ENCODE measurements at regions of chr14 and their contacts with region 1.

Region 1: DNA sequence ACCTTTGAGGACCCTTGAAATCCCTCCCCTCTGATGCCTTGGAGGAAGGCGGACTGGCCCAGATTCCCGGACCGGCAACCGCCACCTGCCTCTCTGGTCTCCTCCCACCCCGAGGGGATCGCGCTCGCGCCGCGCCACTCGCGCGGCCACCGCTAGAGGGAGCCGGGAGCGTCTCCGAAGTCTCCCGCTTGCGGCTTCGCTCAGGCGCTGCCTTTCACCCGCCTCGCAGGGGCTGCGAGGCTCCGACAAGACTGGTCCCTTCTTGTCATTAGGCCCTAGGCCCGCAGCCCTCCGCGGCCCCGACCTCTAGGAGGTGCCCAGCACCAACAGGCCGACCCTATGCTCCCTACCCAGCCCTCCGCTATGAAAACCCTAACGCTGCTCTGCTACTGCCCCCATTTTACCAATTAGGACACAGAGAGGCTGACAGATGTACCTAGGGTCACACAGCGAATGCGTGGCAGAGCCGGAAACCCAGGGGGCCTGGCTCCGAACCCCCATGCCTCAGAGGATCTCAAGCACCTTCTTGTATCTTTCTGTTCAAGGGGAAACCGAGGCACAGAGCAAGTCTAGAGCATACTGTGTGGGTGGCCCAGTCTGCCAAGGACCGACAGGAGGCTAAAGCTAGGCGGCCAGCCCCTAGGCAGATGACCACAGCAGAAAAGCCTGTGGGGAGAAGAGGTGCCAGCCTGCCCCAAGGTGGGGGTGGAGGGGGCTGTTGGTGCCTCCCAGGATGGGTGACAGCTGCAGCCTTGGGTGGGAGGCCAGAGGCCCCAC is 21.4 kb upstream of the VSX2 start:
- DNase-seq: peak; percentile 45
- H3K4me3 Mint-ChIP-seq: no peak overlapping the region
- H3K27ac Mint-ChIP-seq: no peak overlapping the region
- H3K4me1 Mint-ChIP-seq: no peaks in the 10 kb centered on the region
- H3K27me3 Mint-ChIP-seq: no peaks in the 10 kb centered on the region
- CTCF ChIP-seq: peak; percentile 69

Region 2: GRCh38 chr14:74202113-74202512 is 15.7 kb before region 1 on chr14:
- CTCF ChIA-PET with region 1: no interaction called
- POLR2A ChIA-PET with region 1: no interaction called
- intact Hi-C with region 1: loop called (anchors 1 kb)
- DNase-seq: no peak
- H3K4me3 Mint-ChIP-seq: no peak overlapping the region
- H3K27ac Mint-ChIP-seq: no peak overlapping the region
- H3K4me1 Mint-ChIP-seq: no peaks in the 10 kb centered on the region
- H3K27me3 Mint-ChIP-seq: no peaks in the 10 kb centered on the region
- CTCF ChIP-seq: no peak

Region 3: GRCh38 chr14:74231784-74232183 is 13.9 kb after region 1 on chr14:
- CTCF ChIA-PET with region 1: interaction called, 20 read pairs
- POLR2A ChIA-PET with region 1: no interaction called
- intact Hi-C with region 1: no loop called
- DNase-seq: no peak
- H3K4me3 Mint-ChIP-seq: no peak overlapping the region
- H3K27ac Mint-ChIP-seq: no peak overlapping the region
- H3K4me1 Mint-ChIP-seq: no peaks in the 10 kb centered on the region
- H3K27me3 Mint-ChIP-seq: peaks cover 56% of the 10 kb centered on the region
- CTCF ChIP-seq: no peak

Measured in MCF 10A (cell line).